ENCODE measurements at regions of chr3 and their contacts with region 1.

Region 1: DNA sequence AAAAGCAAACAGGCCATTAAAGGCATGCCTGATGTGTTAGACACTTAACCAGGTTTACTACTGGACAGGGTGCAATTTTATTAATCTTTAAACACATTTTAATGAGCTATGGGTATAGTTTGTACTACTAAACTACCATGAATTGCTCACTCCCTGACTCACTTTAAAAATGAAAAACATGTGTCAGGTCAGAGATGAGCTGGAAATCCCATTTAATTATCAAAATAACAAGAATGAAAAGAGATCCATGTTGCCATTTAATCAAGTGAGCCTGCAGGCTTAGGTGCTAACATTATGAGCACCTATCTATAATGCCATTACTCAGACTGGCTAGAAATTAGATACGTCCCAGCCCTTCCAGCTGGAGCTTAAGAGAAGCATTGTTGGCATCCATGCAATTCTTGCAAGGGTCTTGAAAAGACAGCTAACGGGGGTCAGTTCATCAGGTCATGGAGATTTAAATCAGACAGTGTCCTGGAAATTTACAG is 224.4 kb downstream of the THRB start:
- DNase-seq: no peak
- ATAC-seq: no peak
- H3K4me3 ChIP-seq: no peak overlapping the region
- H3K27ac ChIP-seq: no peak overlapping the region
- H3K4me1 ChIP-seq: peaks cover 32% of the 10 kb centered on the region
- H3K27me3 ChIP-seq: no peaks in the 10 kb centered on the region
- CTCF ChIP-seq: no peak

Region 2: GRCh38 chr3:22308871-22309270 is 1961.4 kb before region 1 on chr3:
- CTCF ChIA-PET with region 1: no interaction called
- POLR2A ChIA-PET with region 1: interaction called, 10 read pairs
- intact Hi-C with region 1: no loop called
- DNase-seq: no peak
- ATAC-seq: no peak
- H3K4me3 ChIP-seq: no peak overlapping the region
- H3K27ac ChIP-seq: no peak overlapping the region
- H3K4me1 ChIP-seq: no peaks in the 10 kb centered on the region
- H3K27me3 ChIP-seq: no peaks in the 10 kb centered on the region
- CTCF ChIP-seq: no peak

Region 3: GRCh38 chr3:23761440-23761896 is 508.8 kb before region 1 on chr3:
- CTCF ChIA-PET with region 1: no interaction called
- POLR2A ChIA-PET with region 1: no interaction called
- intact Hi-C with region 1: no loop called
- DNase-seq: peak; percentile 71
- ATAC-seq: peak; percentile 88
- H3K4me3 ChIP-seq: no peak overlapping the region
- H3K27ac ChIP-seq: no peak overlapping the region
- H3K4me1 ChIP-seq: no peaks in the 10 kb centered on the region
- H3K27me3 ChIP-seq: no peaks in the 10 kb centered on the region
- CTCF ChIP-seq: peak; percentile 78

Region 4: GRCh38 chr3:24323272-24323671 is 53.0 kb after region 1 on chr3:
- CTCF ChIA-PET with region 1: no interaction called
- POLR2A ChIA-PET with region 1: interaction called, 9 read pairs
- intact Hi-C with region 1: loop called (anchors 2 kb)
- DNase-seq: peak; percentile 92
- ATAC-seq: peak; percentile 92
- H3K4me3 ChIP-seq: no peak overlapping the region
- H3K27ac ChIP-seq: peak overlapping the region; percentile 28
- H3K4me1 ChIP-seq: peaks cover 24% of the 10 kb centered on the region
- H3K27me3 ChIP-seq: no peaks in the 10 kb centered on the region
- CTCF ChIP-seq: no peak

Region 5: GRCh38 chr3:24343084-24343783 is 73.0 kb after region 1 on chr3:
- CTCF ChIA-PET with region 1: no interaction called
- POLR2A ChIA-PET with region 1: no interaction called
- intact Hi-C with region 1: loop called (anchors 1 kb)
- DNase-seq: peak; percentile 94
- ATAC-seq: peak; percentile 93
- H3K4me3 ChIP-seq: peak overlapping the region; percentile 23; the same call in 1 of the 2 replicates
- H3K27ac ChIP-seq: peak overlapping the region; percentile 86
- H3K4me1 ChIP-seq: peaks cover 48% of the 10 kb centered on the region
- H3K27me3 ChIP-seq: no peaks in the 10 kb centered on the region
- CTCF ChIP-seq: no peak

Region 6: GRCh38 chr3:24365194-24365612 is 95.0 kb after region 1 on chr3:
- CTCF ChIA-PET with region 1: interaction called, 7 read pairs
- POLR2A ChIA-PET with region 1: interaction called, 3 read pairs
- intact Hi-C with region 1: loop called (anchors 2 kb)
- DNase-seq: peak; percentile 98
- ATAC-seq: peak; percentile 100
- H3K4me3 ChIP-seq: peak overlapping the region; percentile 19; the same call in 1 of the 2 replicates
- H3K27ac ChIP-seq: peak overlapping the region; percentile 63
- H3K4me1 ChIP-seq: peaks cover 33% of the 10 kb centered on the region
- H3K27me3 ChIP-seq: no peaks in the 10 kb centered on the region
- CTCF ChIP-seq: peak; percentile 39

Region 7: DNA sequence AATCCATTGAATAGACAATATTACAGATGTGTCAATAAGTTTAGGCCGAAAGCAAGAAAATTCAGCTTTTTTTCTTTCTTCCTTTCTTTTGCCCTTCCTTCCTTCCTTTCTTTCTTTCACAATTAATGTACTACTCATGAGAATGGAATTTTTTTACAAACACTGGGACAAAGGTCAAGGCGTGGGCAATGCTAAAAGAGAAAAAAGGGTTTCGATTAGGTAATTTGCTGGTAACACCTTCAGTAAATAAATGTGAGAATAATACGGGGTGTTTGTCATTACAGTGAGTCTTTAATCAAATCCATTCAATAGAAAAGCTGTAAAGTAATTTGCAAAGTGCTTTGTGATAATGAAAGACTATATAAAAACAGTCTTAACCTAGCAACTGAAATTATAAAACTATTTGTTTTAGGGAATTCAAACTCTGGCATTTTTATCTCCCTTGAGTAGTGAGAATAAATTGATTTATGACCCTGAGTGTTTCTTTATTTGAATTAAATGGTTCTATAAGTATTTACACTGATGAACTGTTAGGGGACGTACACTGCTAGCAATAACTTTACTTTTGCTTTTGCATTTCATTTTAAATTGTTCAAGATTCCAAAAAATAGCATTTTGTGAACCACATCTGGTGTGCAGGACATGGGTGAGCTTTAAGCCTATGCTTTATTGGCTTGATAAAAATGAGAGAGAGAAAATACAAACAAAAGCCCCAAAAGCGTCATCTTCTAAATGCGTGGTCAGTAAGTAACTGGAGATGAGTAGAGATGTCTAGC is 328.6 kb after region 1 on chr3:
- CTCF ChIA-PET with region 1: no interaction called
- POLR2A ChIA-PET with region 1: no interaction called
- intact Hi-C with region 1: loop called (anchors 5 kb)
- DNase-seq: peak; percentile 88
- ATAC-seq: peak; percentile 45
- H3K4me3 ChIP-seq: peak overlapping the region; percentile 45
- H3K27ac ChIP-seq: peak overlapping the region; percentile 50
- H3K4me1 ChIP-seq: peaks cover 41% of the 10 kb centered on the region
- H3K27me3 ChIP-seq: no peaks in the 10 kb centered on the region
- CTCF ChIP-seq: no peak

Region 8: GRCh38 chr3:24640330-24640877 is 370.2 kb after region 1 on chr3:
- CTCF ChIA-PET with region 1: no interaction called
- POLR2A ChIA-PET with region 1: no interaction called
- intact Hi-C with region 1: loop called (anchors 2 kb)
- DNase-seq: peak; percentile 74
- ATAC-seq: peak; percentile 94
- H3K4me3 ChIP-seq: no peak overlapping the region
- H3K27ac ChIP-seq: no peak overlapping the region
- H3K4me1 ChIP-seq: peaks cover 16% of the 10 kb centered on the region
- H3K27me3 ChIP-seq: no peaks in the 10 kb centered on the region
- CTCF ChIP-seq: peak; percentile 95

Measured in PC-3 (cell line).